Activated CD4-positive, alpha-beta T cell treated with anti-CD3 and anti-CD28 coated beads, Interleukin-2, amount 10 ng/mL, durations not matched to agents 7 days and 5 days (primary cell): ENCODE measurements at regions of chr21 and their contacts with region 1.

Region 1: GRCh38 chr21:33360881-33361602 is 36.3 kb downstream of the IFNAR1 start:
- DNase-seq: peak; percentile 87
- H3K4me3 Mint-ChIP-seq: peak overlapping the region; percentile 69
- H3K27ac Mint-ChIP-seq: peak overlapping the region; percentile 92
- H3K4me1 Mint-ChIP-seq: peaks cover 28% of the 10 kb centered on the region
- H3K27me3 Mint-ChIP-seq: no peaks in the 10 kb centered on the region

Region 2: GRCh38 chr21:33332143-33332542 is 28.9 kb before region 1 on chr21:
- CTCF ChIA-PET with region 1: interaction called, 12 read pairs
- POLR2A ChIA-PET with region 1: interaction called, 4 read pairs
- DNase-seq: peak; percentile 53
- H3K4me3 Mint-ChIP-seq: peak overlapping the region; percentile 6
- H3K27ac Mint-ChIP-seq: peak overlapping the region; percentile 64
- H3K4me1 Mint-ChIP-seq: peaks cover 62% of the 10 kb centered on the region
- H3K27me3 Mint-ChIP-seq: no peaks in the 10 kb centered on the region

Region 3: DNA sequence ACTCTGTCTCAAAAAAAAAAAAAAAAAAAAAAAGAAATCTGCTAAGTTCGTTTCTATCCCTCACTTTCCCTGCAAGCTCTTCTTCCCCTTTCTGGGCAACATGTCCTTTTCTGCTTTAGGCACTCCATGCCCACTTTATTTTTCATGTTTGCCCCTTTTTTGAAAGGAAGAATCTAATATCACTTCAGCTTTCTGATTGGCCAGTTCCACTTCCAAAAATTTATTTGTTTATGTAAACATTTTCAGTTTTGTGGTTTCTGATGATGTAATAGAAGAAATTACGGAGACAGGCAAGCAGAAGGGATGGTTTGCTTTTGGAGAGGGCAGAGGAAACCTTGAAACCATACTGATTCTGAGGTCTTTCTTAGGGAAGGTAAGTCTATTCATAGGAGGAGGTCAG is 21.1 kb before region 1 on chr21:
- CTCF ChIA-PET with region 1: interaction called, 13 read pairs
- POLR2A ChIA-PET with region 1: no interaction called
- DNase-seq: no peak
- H3K4me3 Mint-ChIP-seq: no peak overlapping the region
- H3K27ac Mint-ChIP-seq: no peak overlapping the region
- H3K4me1 Mint-ChIP-seq: peaks cover 7% of the 10 kb centered on the region
- H3K27me3 Mint-ChIP-seq: no peaks in the 10 kb centered on the region

Region 4: DNA sequence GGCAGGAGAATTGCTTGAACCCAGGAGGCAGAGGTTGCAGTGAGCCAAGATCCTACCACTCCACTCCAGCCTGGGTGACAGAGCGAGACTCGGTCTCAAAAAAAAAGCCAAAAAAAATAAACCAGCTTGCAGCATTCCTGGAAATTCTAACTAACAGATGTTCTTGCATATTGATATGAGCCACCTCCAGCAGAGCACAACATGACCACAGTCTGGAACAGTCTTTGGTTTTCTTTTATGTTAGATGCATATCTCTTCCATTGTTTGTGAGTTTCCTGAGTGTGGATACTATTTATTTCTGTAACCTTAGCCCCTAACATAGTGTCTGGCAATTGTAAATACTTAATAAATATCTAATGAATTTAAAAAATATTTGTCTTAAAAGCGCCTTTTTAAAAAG is 12.3 kb before region 1 on chr21:
- CTCF ChIA-PET with region 1: interaction called, 40 read pairs
- POLR2A ChIA-PET with region 1: no interaction called
- DNase-seq: no peak
- H3K4me3 Mint-ChIP-seq: no peak overlapping the region
- H3K27ac Mint-ChIP-seq: no peak overlapping the region
- H3K4me1 Mint-ChIP-seq: peaks cover 10% of the 10 kb centered on the region
- H3K27me3 Mint-ChIP-seq: no peaks in the 10 kb centered on the region